ENCODE measurements at regions of chrX and their contacts with region 1.

Region 1: DNA sequence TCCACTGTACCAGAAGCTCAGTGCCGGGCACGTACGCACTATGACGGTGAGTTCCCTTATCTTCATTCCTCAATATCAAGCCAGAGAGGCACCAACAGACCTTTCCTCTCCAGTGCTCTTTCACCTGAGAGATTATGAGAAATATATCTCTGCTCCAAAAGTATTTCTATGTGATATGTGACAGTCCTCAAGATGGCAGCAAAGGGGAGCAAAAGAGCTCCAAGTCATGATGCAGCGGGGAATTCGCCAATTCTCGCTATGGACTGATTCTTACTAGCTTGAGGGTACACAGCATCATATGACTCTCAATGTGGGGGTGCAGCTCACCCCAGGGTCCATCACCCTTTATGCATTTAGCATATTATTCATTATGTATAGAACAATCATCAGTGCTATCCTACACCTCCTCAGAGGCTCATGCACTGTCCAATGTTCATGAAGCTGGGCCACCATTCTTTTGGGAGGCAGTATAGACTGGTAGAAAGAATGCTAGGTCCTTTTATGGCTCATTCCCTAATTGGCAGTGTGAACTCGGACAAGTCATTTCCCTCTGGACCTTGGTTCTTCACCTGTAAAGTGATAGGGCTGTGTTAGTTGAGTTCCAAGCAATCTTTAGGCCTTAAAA is 12.8 kb upstream of the IQSEC2 start:
- DNase-seq: no peak
- ATAC-seq: peak; percentile 75
- H3K4me3 ChIP-seq: no peak overlapping the region
- H3K27ac ChIP-seq: no peak overlapping the region
- H3K4me1 ChIP-seq: no peaks in the 10 kb centered on the region; the same call in 1 of the 2 replicates
- H3K27me3 ChIP-seq: no peaks in the 10 kb centered on the region
- CTCF ChIP-seq: peak; percentile 64

Region 2: GRCh38 chrX:53028678-53029077 is 265.5 kb before region 1 on chrX:
- CTCF ChIA-PET with region 1: no interaction called
- POLR2A ChIA-PET with region 1: interaction called, 10 read pairs
- in situ Hi-C with region 1: no loop called
- intact Hi-C with region 1: no loop called
- DNase-seq: no peak
- ATAC-seq: no peak
- H3K4me3 ChIP-seq: no peak overlapping the region
- H3K27ac ChIP-seq: no peak overlapping the region
- H3K4me1 ChIP-seq: no peaks in the 10 kb centered on the region
- H3K27me3 ChIP-seq: 0 out of 2 replicates have a peak, but pooled peaks cover 3% of the 10 kb centered on the region
- CTCF ChIP-seq: no peak

Region 3: GRCh38 chrX:53317365-53318069 is 23.4 kb after region 1 on chrX:
- CTCF ChIA-PET with region 1: interaction called, 8 read pairs
- POLR2A ChIA-PET with region 1: interaction called, 18 read pairs
- in situ Hi-C with region 1: no loop called
- intact Hi-C with region 1: no loop called
- DNase-seq: no peak
- ATAC-seq: peak; percentile 71
- H3K4me3 ChIP-seq: no peak overlapping the region
- H3K27ac ChIP-seq: no peak overlapping the region
- H3K4me1 ChIP-seq: peaks cover 4% of the 10 kb centered on the region
- H3K27me3 ChIP-seq: no peaks in the 10 kb centered on the region; the same call in none of the 2 replicates
- CTCF ChIP-seq: peak; percentile 91

Region 4: DNA sequence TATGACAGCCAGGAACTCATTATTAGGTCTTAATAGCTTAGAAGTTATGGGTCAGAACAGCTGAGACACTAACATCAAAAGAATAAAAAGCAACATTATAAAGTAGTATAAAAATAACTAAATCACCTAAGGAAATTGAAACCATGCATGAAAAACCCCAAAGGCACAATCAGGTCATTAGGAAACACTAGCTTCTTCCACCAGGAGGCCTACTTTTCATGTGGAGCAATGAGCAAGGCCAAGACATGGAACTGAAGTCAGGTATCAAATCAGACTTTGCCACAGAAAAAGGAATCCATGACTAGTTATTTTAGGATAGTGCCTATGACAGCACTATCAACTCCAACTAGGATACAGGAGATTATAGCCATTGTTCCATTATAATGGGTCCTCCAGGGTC is 384.5 kb after region 1 on chrX:
- CTCF ChIA-PET with region 1: no interaction called
- POLR2A ChIA-PET with region 1: no interaction called
- in situ Hi-C with region 1: no loop called
- intact Hi-C with region 1: no loop called
- DNase-seq: no peak
- ATAC-seq: no peak
- H3K4me3 ChIP-seq: no peak overlapping the region
- H3K27ac ChIP-seq: no peak overlapping the region
- H3K4me1 ChIP-seq: peaks cover 5% of the 10 kb centered on the region
- H3K27me3 ChIP-seq: no peaks in the 10 kb centered on the region
- CTCF ChIP-seq: no peak